ENCODE measurements at regions of chr13 and their contacts with region 1.

Region 1: DNA sequence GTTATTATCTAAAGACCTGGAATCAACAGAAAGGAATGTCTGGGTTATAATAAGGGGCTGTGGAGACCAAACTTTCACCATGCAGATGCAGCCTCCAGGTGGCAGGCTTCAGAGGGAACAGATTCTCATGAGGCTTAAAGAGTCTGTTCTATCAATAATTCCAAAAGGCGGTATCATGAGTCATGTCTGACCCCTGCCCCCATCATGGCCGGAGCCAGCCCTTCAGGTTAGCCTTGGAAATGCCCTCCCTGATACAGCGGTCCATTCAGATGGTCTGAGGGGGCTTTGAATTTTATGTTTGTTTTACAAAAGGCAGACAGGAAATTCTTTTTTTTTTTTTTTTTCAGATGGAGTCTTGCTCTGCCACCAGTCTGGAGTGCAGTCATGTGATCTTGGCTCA is 21.7 kb upstream of the LAMP1 start:
- DNase-seq: peak; percentile 37 to 71 (median 63)
- ATAC-seq: peak; percentile 96
- H3K4me3 ChIP-seq: no peak overlapping the region
- H3K27ac ChIP-seq: no peak overlapping the region
- H3K4me1 ChIP-seq: peaks cover 6 to 20% of the 10 kb centered on the region in 2 experiments; a peak in 4 of 5 replicates
- H3K27me3 ChIP-seq: peaks cover 0 to 4% of the 10 kb centered on the region in 2 experiments; a peak in 2 of 5 replicates
- CTCF ChIP-seq: peak; percentile 52 to 57 (median 54); a peak in 5 of 6 replicates
- EP300 ChIP-seq: no peak
- POLR2A ChIP-seq: no peak
- RAD21 ChIP-seq: peak; percentile 17 to 62; a peak in 2 of 4 replicates

Region 2: GRCh38 chr13:112204881-112205327 is 1070.5 kb before region 1 on chr13:
- CTCF ChIA-PET with region 1: no interaction called
- POLR2A ChIA-PET with region 1: no interaction called
- in situ Hi-C with region 1: no loop called
- intact Hi-C with region 1: no loop called
- DNase-seq: no peak
- ATAC-seq: no peak
- H3K4me3 ChIP-seq: no peak overlapping the region
- H3K27ac ChIP-seq: no peak overlapping the region
- H3K4me1 ChIP-seq: no peaks in the 10 kb centered on the region
- H3K27me3 ChIP-seq: peaks cover 0 to 44% of the 10 kb centered on the region in 2 experiments; a peak in 3 of 5 replicates
- CTCF ChIP-seq: no peak
- EP300 ChIP-seq: no peak
- POLR2A ChIP-seq: no peak
- RAD21 ChIP-seq: no peak

Region 3: DNA sequence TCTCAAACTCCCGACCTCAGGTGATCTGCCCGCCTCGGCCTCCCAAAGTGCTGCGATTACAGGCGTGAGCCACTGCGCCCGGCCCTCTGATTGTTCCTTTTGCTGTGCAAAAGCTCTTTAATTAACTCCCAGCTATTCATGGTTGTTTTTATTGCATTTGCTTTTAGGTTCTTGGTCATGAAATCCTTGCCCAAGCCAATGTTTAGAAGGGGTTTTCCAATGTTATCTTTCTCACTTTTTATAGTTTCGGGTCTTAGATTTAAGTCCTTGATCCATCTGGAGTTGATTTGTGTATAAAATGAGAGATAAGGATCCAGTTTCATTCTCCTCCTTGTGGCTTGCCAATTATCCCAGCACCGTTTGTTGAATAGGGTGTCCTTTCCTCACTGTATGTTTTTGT is 107.7 kb after region 1 on chr13:
- CTCF ChIA-PET with region 1: no interaction called
- POLR2A ChIA-PET with region 1: no interaction called
- in situ Hi-C with region 1: loop called (anchors 10 kb)
- intact Hi-C with region 1: no loop called
- DNase-seq: no peak
- ATAC-seq: no peak
- H3K4me3 ChIP-seq: no peak overlapping the region
- H3K27ac ChIP-seq: no peak overlapping the region
- H3K4me1 ChIP-seq: peaks cover 4 to 5% of the 10 kb centered on the region in 2 experiments; a peak in 3 of 5 replicates
- H3K27me3 ChIP-seq: peaks cover 0 to 7% of the 10 kb centered on the region in 2 experiments; a peak in 2 of 5 replicates
- CTCF ChIP-seq: no peak
- EP300 ChIP-seq: no peak
- POLR2A ChIP-seq: no peak
- RAD21 ChIP-seq: no peak

Region 4: GRCh38 chr13:113393563-113394338 is 118.4 kb after region 1 on chr13:
- CTCF ChIA-PET with region 1: no interaction called
- POLR2A ChIA-PET with region 1: no interaction called
- in situ Hi-C with region 1: loop called (anchors 10 kb)
- intact Hi-C with region 1: loop called (anchors 2 kb)
- DNase-seq: peak; percentile 78 to 85 (median 82)
- ATAC-seq: peak; percentile 97
- H3K4me3 ChIP-seq: peak overlapping the region; percentile 41
- H3K27ac ChIP-seq: no peak overlapping the region
- H3K4me1 ChIP-seq: peaks cover 0 to 18% of the 10 kb centered on the region in 2 experiments; a peak in 3 of 5 replicates
- H3K27me3 ChIP-seq: peaks cover 0 to 27% of the 10 kb centered on the region in 2 experiments; a peak in 2 of 5 replicates
- CTCF ChIP-seq: peak; percentile 41 to 92 (median 69)
- EP300 ChIP-seq: no peak
- POLR2A ChIP-seq: no peak
- RAD21 ChIP-seq: peak; percentile 56 to 76; a peak in 3 of 4 replicates

Region 5: DNA sequence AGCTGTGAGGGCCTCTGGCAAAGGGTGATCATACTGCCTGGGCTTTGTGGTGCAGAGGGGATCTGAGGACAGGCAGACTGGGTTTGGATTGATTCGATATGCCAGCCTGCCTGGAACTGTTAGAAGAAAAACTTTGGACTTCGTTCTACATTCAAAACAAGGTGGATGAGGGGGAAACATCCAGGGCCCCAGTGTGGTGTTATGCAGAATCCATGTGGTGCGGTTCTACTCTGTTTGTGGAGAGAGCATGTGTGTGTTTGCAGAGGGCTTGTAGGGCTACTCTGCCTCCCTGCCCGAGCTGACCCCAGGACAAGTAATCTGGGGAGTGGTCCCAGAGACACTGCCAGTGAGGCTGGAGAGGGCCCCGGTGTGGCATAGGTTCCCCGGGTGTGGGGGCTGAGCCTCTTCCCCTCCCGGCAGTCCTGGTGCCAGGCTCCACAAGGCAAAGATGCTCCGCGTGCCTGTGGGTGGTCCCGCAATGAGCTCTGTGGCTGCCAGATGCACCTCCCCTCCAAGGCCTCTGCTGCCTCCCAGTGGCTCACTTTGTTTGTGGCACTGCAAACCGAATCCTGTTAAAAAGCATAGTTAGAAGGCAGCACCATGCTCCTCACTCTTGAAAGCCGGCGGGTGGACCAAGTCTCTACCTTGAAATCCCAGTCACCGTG is 286.8 kb after region 1 on chr13:
- CTCF ChIA-PET with region 1: no interaction called
- POLR2A ChIA-PET with region 1: no interaction called
- in situ Hi-C with region 1: no loop called
- intact Hi-C with region 1: loop called (anchors 10 kb)
- DNase-seq: peak; percentile 57 to 67 (median 58)
- ATAC-seq: peak; percentile 92
- H3K4me3 ChIP-seq: no peak overlapping the region
- H3K27ac ChIP-seq: no peak overlapping the region
- H3K4me1 ChIP-seq: peaks cover 0 to 9% of the 10 kb centered on the region in 2 experiments; a peak in 3 of 5 replicates
- H3K27me3 ChIP-seq: no peaks in the 10 kb centered on the region
- CTCF ChIP-seq: peak; percentile 77 to 81 (median 78)
- EP300 ChIP-seq: no peak
- POLR2A ChIP-seq: no peak
- RAD21 ChIP-seq: peak; percentile 47 to 68

Measured in K562 (cell line).